ENCODE measurements at regions of chr4 and their contacts with region 1.

Region 1: DNA sequence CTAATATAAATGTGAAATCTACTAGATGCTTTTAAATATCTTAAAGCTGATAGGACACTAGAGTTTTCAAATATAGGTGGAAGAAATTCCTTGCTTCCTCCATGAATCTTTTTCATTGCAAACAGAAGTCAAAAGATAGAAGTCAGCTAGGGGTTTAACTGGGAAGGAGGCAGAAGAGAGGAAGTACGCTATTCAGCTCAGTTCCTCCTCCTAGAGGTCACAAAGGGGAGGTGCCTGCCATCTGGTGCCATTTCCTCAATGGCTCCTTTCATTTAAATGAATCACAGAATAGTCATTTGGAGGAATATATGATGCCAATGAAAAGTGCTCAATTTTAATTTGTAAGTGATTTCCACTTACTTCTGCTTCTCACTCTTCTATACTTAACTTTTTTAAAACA is 8.5 kb downstream of the COL25A1 start:
- DNase-seq: no peak
- ATAC-seq: peak; percentile 98
- H3K4me3 ChIP-seq: no peak overlapping the region
- H3K27ac ChIP-seq: no peak overlapping the region
- H3K4me1 ChIP-seq: no peaks in the 10 kb centered on the region
- H3K27me3 ChIP-seq: no peaks in the 10 kb centered on the region
- CTCF ChIP-seq: peak; percentile 63 to 76 (median 75)
- EP300 ChIP-seq: no peak
- POLR2A ChIP-seq: no peak
- RAD21 ChIP-seq: peak; percentile 39

Region 2: GRCh38 chr4:108683479-108683878 is 610.5 kb before region 1 on chr4:
- CTCF ChIA-PET with region 1: interaction called, 8 read pairs
- POLR2A ChIA-PET with region 1: no interaction called
- RAD21 ChIA-PET with region 1: no interaction called
- SMC1A ChIA-PET with region 1: interaction called, 3 read pairs
- in situ Hi-C with region 1: no loop called
- intact Hi-C with region 1: loop called (anchors 10 kb)
- DNase-seq: no peak
- ATAC-seq: peak; percentile 70
- H3K4me3 ChIP-seq: no peak overlapping the region
- H3K27ac ChIP-seq: no peak overlapping the region
- H3K4me1 ChIP-seq: no peaks in the 10 kb centered on the region
- H3K27me3 ChIP-seq: no peaks in the 10 kb centered on the region
- CTCF ChIP-seq: peak in 2 of 3 experiments; percentile 29 to 35; a peak in 2 of 6 replicates
- EP300 ChIP-seq: no peak
- POLR2A ChIP-seq: no peak
- RAD21 ChIP-seq: peak; percentile 39

Region 3: GRCh38 chr4:109078724-109079123 is 215.3 kb before region 1 on chr4:
- CTCF ChIA-PET with region 1: interaction called, 88 read pairs
- POLR2A ChIA-PET with region 1: no interaction called
- RAD21 ChIA-PET with region 1: interaction called, 20 read pairs
- SMC1A ChIA-PET with region 1: interaction called, 14 read pairs
- in situ Hi-C with region 1: no loop called
- intact Hi-C with region 1: loop called (anchors 5 kb)
- DNase-seq: no peak
- ATAC-seq: no peak
- H3K4me3 ChIP-seq: no peak overlapping the region
- H3K27ac ChIP-seq: no peak overlapping the region
- H3K4me1 ChIP-seq: no peaks in the 10 kb centered on the region
- H3K27me3 ChIP-seq: no peaks in the 10 kb centered on the region
- CTCF ChIP-seq: no peak
- EP300 ChIP-seq: no peak
- POLR2A ChIP-seq: no peak
- RAD21 ChIP-seq: no peak

Region 4: DNA sequence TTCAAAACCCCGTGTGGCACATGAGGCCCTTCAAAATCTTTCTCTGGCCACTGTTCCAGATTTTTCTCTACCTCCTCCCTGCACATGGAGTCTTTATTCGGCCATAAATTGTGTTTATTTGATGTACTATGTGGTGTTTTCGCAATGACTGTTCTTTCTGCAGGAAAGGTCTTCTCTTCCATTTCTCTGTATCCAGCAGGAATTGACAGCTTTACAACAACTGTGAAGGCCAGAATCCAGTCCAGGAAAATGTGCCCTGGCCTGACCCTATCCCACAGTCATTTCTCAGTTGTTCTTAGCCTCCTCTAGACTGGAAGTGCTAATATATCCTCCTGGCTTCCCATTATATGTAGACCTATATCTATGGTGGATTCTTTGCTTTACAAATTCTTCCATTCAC is 183.0 kb before region 1 on chr4:
- CTCF ChIA-PET with region 1: interaction called, 12 read pairs
- POLR2A ChIA-PET with region 1: no interaction called
- RAD21 ChIA-PET with region 1: no interaction called
- SMC1A ChIA-PET with region 1: interaction called, 3 read pairs
- in situ Hi-C with region 1: no loop called
- intact Hi-C with region 1: no loop called
- DNase-seq: no peak
- ATAC-seq: no peak
- H3K4me3 ChIP-seq: no peak overlapping the region
- H3K27ac ChIP-seq: no peak overlapping the region
- H3K4me1 ChIP-seq: no peaks in the 10 kb centered on the region
- H3K27me3 ChIP-seq: no peaks in the 10 kb centered on the region
- CTCF ChIP-seq: no peak
- EP300 ChIP-seq: no peak
- POLR2A ChIP-seq: no peak
- RAD21 ChIP-seq: no peak

Region 5: GRCh38 chr4:109155682-109156283 is 138.2 kb before region 1 on chr4:
- CTCF ChIA-PET with region 1: interaction called, 4 read pairs
- POLR2A ChIA-PET with region 1: no interaction called
- RAD21 ChIA-PET with region 1: interaction called, 12 read pairs
- SMC1A ChIA-PET with region 1: interaction called, 14 read pairs
- in situ Hi-C with region 1: no loop called
- intact Hi-C with region 1: no loop called
- DNase-seq: no peak
- ATAC-seq: peak; percentile 33; the same call in 1 of the 3 replicates
- H3K4me3 ChIP-seq: no peak overlapping the region
- H3K27ac ChIP-seq: no peak overlapping the region
- H3K4me1 ChIP-seq: no peaks in the 10 kb centered on the region
- H3K27me3 ChIP-seq: no peaks in the 10 kb centered on the region; a peak in 1 of 4 replicates
- CTCF ChIP-seq: no peak
- EP300 ChIP-seq: no peak
- POLR2A ChIP-seq: no peak
- RAD21 ChIP-seq: no peak

Region 6: GRCh38 chr4:109238746-109239145 is 55.3 kb before region 1 on chr4:
- CTCF ChIA-PET with region 1: interaction called, 14 read pairs
- POLR2A ChIA-PET with region 1: no interaction called
- RAD21 ChIA-PET with region 1: interaction called, 4 read pairs
- SMC1A ChIA-PET with region 1: interaction called, 15 read pairs
- in situ Hi-C with region 1: no loop called
- intact Hi-C with region 1: no loop called
- DNase-seq: no peak
- ATAC-seq: peak; percentile 89
- H3K4me3 ChIP-seq: no peak overlapping the region
- H3K27ac ChIP-seq: no peak overlapping the region
- H3K4me1 ChIP-seq: no peaks in the 10 kb centered on the region
- H3K27me3 ChIP-seq: no peaks in the 10 kb centered on the region
- CTCF ChIP-seq: no peak
- EP300 ChIP-seq: no peak
- POLR2A ChIP-seq: no peak
- RAD21 ChIP-seq: no peak

Region 7: GRCh38 chr4:109278594-109279031 is 15.4 kb before region 1 on chr4:
- CTCF ChIA-PET with region 1: interaction called, 51 read pairs
- POLR2A ChIA-PET with region 1: interaction called, 4 read pairs
- RAD21 ChIA-PET with region 1: interaction called, 54 read pairs
- SMC1A ChIA-PET with region 1: interaction called, 62 read pairs
- in situ Hi-C with region 1: no loop called
- intact Hi-C with region 1: no loop called
- DNase-seq: peak; percentile 32
- ATAC-seq: peak; percentile 90
- H3K4me3 ChIP-seq: no peak overlapping the region
- H3K27ac ChIP-seq: no peak overlapping the region
- H3K4me1 ChIP-seq: no peaks in the 10 kb centered on the region; the same call in 1 of the 2 replicates
- H3K27me3 ChIP-seq: no peaks in the 10 kb centered on the region
- CTCF ChIP-seq: no peak
- EP300 ChIP-seq: peak; percentile 84 to 95; a peak in 3 of 4 replicates
- POLR2A ChIP-seq: no peak
- RAD21 ChIP-seq: no peak

Region 8: GRCh38 chr4:109424093-109424841 is 130.3 kb after region 1 on chr4:
- CTCF ChIA-PET with region 1: no interaction called
- POLR2A ChIA-PET with region 1: no interaction called
- RAD21 ChIA-PET with region 1: no interaction called
- SMC1A ChIA-PET with region 1: no interaction called
- in situ Hi-C with region 1: no loop called
- intact Hi-C with region 1: no loop called
- DNase-seq: no peak
- ATAC-seq: peak; percentile 68
- H3K4me3 ChIP-seq: no peak overlapping the region
- H3K27ac ChIP-seq: no peak overlapping the region
- H3K4me1 ChIP-seq: no peaks in the 10 kb centered on the region
- H3K27me3 ChIP-seq: no peaks in the 10 kb centered on the region
- CTCF ChIP-seq: no peak
- EP300 ChIP-seq: no peak
- POLR2A ChIP-seq: no peak
- RAD21 ChIP-seq: no peak

Measured in GM12878 (cell line).